Cardiac septum (tissue), 1 donor: ENCODE measurements at regions of chr2 and their contacts with region 1.

Region 1: DNA sequence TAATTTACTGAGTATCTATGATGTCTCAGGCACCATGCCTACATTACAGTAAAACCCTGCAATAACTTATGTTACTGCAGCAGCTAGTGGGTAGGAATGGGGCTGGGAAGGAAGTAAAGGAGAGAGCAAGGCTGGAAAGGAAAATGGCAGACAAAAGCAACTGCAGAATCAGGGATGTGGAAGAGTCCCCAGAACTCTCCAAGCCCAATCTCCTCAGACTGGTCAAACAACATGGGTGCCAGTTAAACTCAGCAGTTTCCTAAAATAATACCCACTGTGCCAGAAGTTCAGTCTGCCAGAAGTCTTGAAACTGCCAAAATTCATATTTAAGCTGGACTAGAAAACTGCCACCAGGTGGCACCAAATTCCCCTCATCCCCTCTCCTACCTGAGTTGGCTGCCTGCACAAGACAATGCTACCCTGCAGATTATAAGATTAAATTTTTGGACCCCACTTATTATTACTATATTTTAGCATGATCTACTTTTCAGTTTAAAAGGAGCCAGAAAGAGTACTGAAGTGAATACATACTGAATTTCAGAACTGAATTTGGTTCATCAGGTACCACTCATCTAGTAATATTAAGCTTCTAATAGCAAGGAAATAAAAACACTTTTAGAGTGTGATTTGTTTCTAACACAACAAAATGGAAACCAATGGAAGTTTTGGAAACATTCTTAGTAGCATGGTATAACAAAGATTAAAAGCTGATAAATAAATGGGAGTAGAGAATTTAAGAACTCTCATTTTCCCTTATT is 86.8 kb upstream of the DNER start:
- DNase-seq: no peak

Region 2: DNA sequence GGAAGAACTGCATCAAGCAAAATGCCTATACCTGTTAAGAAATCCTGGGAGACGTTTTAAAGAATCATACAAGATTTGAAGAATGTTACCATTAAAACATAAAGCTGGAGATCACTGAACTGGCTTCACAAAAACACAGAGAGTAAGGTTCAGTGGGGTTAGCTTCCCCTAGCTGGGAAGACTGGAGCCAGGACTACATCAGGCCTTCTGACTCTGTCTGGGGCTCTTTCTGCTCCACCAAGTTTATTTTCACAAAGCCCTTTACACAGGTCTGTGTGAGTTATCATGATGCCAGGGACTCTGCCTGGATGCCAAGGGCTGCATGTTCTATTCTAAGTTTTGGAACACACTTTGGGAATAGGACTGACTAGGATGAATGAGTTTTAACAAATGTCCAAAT is 39.5 kb before region 1 on chr2:
- intact Hi-C with region 1: no loop called
- DNase-seq: no peak

Region 3: DNA sequence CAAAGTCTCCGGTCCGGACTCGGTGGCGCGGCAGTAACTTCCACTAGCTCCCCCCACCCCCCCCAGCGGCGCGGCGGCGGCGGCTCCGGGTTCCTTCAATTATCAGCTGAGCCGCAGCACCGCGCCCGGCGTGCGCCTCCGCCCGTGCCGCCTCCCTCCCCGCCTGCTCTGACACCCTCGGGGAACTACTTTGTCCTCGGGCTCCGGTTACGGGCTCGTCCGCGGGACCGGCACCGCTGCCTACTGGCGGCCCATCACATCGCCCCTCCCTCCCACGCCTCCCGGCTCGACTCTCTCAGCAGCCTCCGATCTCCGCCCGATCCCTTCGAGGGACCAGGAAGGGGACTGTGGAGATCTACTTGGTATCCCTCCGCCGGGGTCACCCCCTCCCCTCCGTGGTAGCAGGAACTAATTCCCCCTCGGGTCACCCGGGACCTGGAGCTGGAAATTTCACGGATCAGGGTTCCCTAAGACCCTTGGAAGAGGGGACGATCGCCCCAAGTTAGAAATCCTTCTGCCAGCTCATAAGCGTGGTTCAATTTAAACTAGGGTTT is 120.8 kb after region 1 on chr2 and contains the start of gene TRIP12:
- intact Hi-C with region 1: loop called (anchors 5 kb)
- DNase-seq: peak; percentile 95
- total RNA-seq, gene TRIP12: 222 TPM

Region 4: DNA sequence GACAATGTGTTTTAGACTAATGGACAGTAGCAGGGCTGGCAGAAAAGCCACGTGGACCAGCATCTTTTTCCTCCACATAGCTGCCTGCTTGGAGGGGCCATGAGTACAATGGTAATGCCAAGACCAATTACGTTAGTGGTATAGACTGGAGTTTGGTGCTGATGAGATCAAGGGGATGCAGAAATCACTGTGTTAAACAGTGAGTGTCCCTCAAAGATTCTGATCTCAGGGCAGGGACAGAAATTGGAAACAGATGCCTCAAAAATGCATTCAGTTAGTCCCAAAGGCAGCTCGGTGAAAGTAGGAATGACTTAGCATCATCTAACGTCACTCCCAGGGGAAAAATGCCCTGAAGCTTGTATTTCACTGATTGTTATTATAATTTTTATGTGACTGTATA is 195.1 kb after region 1 on chr2:
- intact Hi-C with region 1: no loop called
- DNase-seq: no peak

Region 5: DNA sequence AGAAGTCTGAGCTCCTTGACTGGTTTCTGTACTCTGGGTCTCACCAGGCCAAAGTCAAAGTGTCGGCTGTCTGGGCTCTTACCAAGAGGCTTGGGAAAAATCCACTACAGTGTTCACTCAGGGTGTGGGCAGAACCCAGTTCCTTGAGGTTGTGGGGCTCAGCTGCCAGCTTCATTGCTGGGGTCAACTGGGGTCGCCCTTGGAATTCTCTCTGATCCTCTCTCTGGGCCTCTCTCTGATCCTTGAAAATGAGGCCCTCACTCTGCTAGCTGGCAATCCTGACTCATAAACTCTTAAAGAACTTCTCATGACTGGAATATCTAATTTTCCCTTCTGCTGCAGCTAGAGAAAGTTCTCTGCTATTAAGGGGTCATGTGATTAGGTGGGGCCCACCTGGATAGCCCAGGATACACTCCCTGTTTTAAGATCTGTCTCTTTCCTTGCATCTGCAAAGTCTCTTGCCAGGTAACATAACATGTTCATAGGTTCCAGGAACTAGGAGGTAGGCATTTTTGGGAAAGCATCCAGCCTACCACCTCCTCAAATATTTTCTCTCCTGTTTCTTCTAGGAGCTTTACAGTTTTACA is 352.3 kb after region 1 on chr2:
- intact Hi-C with region 1: loop called (anchors 10 kb)
- DNase-seq: no peak